ENCODE measurements at regions of chr7 and their contacts with region 1.

Region 1: DNA sequence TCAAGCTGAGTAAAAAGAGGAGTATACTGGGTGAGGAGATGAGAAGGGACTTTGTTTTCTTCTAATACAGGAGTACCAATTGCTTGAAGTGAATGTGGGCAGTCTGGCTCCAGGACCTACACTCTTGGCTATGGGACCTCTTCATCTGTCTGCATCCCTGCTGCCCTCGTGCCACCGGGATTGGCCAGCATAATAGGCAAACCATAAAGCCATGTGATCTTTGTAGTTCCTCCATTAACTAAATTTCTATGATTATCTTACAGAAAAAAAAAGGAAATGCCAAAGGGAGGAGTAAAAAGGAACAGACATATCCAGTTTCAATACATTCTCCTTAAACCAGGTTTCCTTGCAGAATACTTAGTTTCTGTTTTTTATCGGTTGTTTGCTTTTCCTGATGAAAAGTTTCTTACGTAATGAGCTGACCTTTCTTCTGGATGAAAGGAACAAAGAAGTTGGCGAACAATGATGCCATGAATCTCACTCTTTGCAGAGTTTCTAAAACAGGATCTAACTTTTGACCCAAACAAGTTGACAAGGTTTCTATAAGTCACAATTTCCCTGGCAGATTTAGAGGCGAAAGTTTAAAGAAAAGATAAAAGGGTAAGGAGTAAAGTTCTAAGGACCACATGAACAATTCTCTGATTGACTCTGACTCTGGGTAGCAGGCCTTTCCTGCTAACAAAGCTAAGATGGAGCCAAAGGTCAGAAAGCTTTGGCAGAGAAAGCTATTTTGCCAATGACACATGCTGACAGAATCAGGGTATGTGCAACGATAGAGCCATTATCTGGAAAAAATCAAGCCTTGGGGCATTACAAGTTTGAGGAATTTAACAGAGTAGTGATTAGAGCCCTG is 54.1 kb downstream of the LAMB1 start:
- DNase-seq: peak; percentile 90
- H3K4me3 Mint-ChIP-seq: peak overlapping the region; percentile 37
- H3K27ac Mint-ChIP-seq: peak overlapping the region; percentile 85
- H3K4me1 Mint-ChIP-seq: peaks cover 47% of the 10 kb centered on the region
- H3K27me3 Mint-ChIP-seq: no peaks in the 10 kb centered on the region
- CTCF ChIP-seq: no peak

Region 2: DNA sequence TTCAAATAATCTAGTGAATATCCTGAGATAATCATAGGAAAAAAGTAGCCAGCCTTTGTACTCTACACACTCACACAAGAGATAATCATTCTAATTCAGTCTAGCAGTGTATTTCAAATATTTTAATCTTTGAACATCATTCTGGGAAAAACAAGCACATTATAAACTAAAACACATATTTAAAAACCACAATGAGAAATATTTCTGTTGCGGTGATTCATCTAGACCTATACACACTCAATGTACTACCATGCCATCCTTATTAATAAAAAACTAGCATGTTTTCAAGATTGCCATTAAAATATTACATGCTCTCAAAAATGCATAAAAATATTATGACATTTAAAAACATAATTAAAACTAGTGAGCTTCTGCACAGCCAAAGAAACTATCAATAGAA is 396.9 kb before region 1 on chr7:
- CTCF ChIA-PET with region 1: no interaction called
- POLR2A ChIA-PET with region 1: no interaction called
- intact Hi-C with region 1: no loop called
- DNase-seq: no peak
- H3K4me3 Mint-ChIP-seq: no peak overlapping the region
- H3K27ac Mint-ChIP-seq: no peak overlapping the region
- H3K4me1 Mint-ChIP-seq: peaks cover 7% of the 10 kb centered on the region
- H3K27me3 Mint-ChIP-seq: no peaks in the 10 kb centered on the region
- CTCF ChIP-seq: no peak

Region 3: DNA sequence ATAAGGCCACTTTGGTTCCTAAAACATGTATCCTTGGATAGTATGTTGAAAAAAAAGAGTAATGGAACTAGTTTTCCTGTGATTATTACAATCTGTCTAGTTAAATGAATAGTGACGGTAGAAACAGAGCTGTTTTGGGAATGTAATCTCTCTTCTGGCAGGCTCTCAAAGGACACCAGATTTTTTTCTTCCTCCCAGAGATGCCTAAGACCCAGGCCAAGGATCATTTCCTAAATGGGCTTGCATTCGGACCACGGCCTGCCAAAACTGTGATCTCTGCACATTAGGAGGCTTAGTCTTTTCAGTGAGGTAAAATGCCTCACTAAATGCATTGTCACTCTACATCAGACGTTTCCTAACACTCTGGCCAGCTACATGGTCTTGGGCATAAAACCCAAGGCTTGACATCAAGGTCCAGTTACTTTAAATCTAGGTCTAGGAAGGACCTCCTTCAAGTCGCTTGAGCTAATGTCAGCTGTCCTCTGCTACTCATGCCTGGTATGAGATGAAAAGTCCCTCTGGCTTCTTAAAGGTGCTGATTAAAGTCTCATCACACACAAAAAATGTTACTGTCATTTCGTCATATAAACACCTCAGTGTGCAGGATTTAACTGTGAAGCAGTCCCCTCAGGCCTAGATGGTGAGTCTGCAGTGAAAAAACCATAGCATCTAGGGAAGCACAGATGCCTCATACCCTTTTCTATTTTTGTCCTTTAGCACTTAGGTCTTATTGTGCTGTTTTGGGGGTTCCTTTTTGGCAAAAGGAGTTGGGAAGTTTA is 10.2 kb before region 1 on chr7:
- CTCF ChIA-PET with region 1: no interaction called
- POLR2A ChIA-PET with region 1: interaction called, 44 read pairs
- intact Hi-C with region 1: no loop called
- DNase-seq: no peak
- H3K4me3 Mint-ChIP-seq: no peak overlapping the region
- H3K27ac Mint-ChIP-seq: no peak overlapping the region
- H3K4me1 Mint-ChIP-seq: peaks cover 12% of the 10 kb centered on the region
- H3K27me3 Mint-ChIP-seq: no peaks in the 10 kb centered on the region
- CTCF ChIP-seq: no peak

Region 4: GRCh38 chr7:107966711-107967110 is 17.8 kb after region 1 on chr7:
- CTCF ChIA-PET with region 1: interaction called, 6 read pairs
- POLR2A ChIA-PET with region 1: interaction called, 337 read pairs
- intact Hi-C with region 1: no loop called
- DNase-seq: peak; percentile 75
- H3K4me3 Mint-ChIP-seq: no peak overlapping the region
- H3K27ac Mint-ChIP-seq: no peak overlapping the region
- H3K4me1 Mint-ChIP-seq: peaks cover 17% of the 10 kb centered on the region
- H3K27me3 Mint-ChIP-seq: no peaks in the 10 kb centered on the region
- CTCF ChIP-seq: no peak

Region 5: GRCh38 chr7:107995184-107996071 is 46.6 kb after region 1 on chr7:
- CTCF ChIA-PET with region 1: no interaction called
- POLR2A ChIA-PET with region 1: interaction called, 27 read pairs
- intact Hi-C with region 1: loop called (anchors 5 kb)
- DNase-seq: peak; percentile 90
- H3K4me3 Mint-ChIP-seq: peak overlapping the region; percentile 61
- H3K27ac Mint-ChIP-seq: peak overlapping the region; percentile 93
- H3K4me1 Mint-ChIP-seq: peaks cover 37% of the 10 kb centered on the region
- H3K27me3 Mint-ChIP-seq: no peaks in the 10 kb centered on the region
- CTCF ChIP-seq: no peak

Measured in MCF 10A (cell line).